Calu3 (cell line): ENCODE measurements at regions of chr15 and their contacts with region 1.

Region 1: GRCh38 chr15:63600616-63601025 is 3.4 kb downstream of the FBXL22 start:
- DNase-seq: peak; percentile 93
- H3K4me3 Mint-ChIP-seq: peak overlapping the region; percentile 96
- H3K27ac Mint-ChIP-seq: peak overlapping the region; percentile 64
- H3K4me1 Mint-ChIP-seq: peaks cover 21% of the 10 kb centered on the region
- H3K27me3 Mint-ChIP-seq: no peaks in the 10 kb centered on the region
- CTCF ChIP-seq: no peak

Region 2: DNA sequence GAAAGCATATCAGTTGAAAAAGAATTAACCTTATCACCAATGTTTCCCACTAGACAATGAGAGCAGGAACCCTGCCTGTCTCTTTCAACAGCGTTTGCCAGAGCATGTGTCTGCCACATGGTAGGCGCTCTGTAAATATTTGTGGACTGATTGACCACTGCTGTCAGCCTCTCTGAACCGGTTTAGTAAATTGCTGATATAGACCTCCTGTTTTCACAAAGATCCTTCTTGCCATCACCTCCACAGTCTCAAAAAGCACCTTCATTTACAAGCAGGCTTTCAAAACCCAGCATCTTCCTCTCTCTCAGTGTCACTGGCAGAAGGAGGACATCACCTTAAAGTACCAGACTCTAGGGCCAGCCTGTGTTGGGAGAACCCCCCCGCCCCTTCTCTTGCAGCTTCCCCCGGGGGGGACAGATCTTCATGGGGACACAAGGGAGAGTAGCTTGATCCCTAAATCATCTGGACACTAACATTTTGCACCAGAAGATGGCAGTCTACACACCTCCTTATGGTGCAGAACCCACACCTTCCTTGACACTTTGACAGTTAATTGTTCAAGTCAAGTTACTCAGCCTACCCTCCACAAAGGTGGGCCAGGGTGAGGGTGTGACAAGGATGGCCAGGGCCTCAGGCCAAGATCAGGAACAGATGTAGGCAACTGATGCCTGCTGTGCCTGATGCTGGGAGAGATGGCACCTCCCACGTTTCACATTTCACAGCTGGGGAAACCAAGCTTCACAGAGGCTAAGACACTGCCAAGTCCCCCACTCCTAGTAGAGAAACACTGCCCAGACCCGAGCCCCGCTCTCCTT is 134.0 kb before region 1 on chr15:
- CTCF ChIA-PET with region 1: interaction called, 27 read pairs
- intact Hi-C with region 1: loop called (anchors 1 kb)
- DNase-seq: peak; percentile 69
- H3K4me3 Mint-ChIP-seq: no peak overlapping the region
- H3K27ac Mint-ChIP-seq: no peak overlapping the region
- H3K4me1 Mint-ChIP-seq: peaks cover 51% of the 10 kb centered on the region
- H3K27me3 Mint-ChIP-seq: no peaks in the 10 kb centered on the region
- CTCF ChIP-seq: peak; percentile 68